Caco-2 (cell line): ENCODE measurements at regions of chr5 and their contacts with region 1.

Region 1: GRCh38 chr5:87267574-87268125 is at the start of gene RASA1:
- DNase-seq: peak; percentile 96 to 97
- H3K4me3 ChIP-seq: peak within 1 kb of the TSS; percentile 96
- H3K4me3 Mint-ChIP-seq: peak within 1 kb of the TSS; percentile 81
- H3K27ac Mint-ChIP-seq: peak within 1 kb of the TSS; percentile 83
- H3K4me1 ChIP-seq: peaks cover 6% of the 10 kb centered on the region
- H3K4me1 Mint-ChIP-seq: peaks cover 13% of the 10 kb centered on the region
- H3K27me3 ChIP-seq: no peaks in the 10 kb centered on the region
- H3K27me3 Mint-ChIP-seq: no peaks in the 10 kb centered on the region
- CTCF ChIP-seq: no peak
- total RNA-seq, gene RASA1: 23.0 and 24.4 TPM in 2 replicates

Region 2: DNA sequence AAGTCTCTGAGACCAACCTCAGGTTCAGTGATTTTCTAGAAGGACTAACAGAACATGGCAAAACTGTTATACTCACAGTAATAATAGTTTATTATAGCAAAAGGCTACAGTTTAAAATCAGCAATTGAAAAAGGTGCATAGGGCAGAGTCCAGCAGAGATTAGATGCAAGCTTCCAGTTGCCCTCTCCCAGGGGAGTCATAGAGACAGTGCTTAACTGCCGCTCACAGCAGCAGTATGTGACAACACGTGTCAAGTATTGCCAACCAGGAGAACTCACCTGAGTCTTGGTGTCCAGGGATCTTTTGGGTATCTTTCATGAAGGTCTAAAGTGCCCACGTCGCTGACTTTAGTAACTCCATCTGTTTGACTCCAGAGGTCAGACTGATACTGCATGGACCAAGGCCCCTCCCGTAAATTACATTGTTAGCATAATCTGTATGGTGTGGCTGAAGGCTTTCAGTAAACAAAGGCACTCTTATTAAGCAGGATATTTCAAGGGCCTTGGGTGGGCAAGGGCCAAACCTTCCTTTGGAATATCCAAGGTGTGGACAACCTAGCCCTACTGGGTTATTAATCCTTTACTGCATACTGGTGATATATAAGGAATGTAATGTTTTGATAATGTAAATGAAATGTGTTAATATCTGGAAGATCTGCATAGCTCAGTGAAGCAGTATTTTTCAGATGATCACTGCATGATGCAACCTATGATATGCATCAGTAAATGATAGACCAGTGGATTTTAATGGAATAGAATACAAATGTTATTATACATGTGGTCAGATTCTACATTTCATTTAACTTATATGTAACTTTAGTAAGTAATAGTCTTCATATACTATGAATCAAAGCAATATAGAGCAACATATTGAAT is 44.0 kb after region 1 on chr5:
- CTCF ChIA-PET with region 1: no interaction called
- POLR2A ChIA-PET with region 1: no interaction called
- intact Hi-C with region 1: loop called (anchors 2 kb)
- DNase-seq: peak; percentile 10 to 43
- H3K4me3 ChIP-seq: no peak overlapping the region
- H3K4me3 Mint-ChIP-seq: no peak overlapping the region
- H3K27ac Mint-ChIP-seq: no peak overlapping the region
- H3K4me1 ChIP-seq: peaks cover 14% of the 10 kb centered on the region
- H3K4me1 Mint-ChIP-seq: peaks cover 24% of the 10 kb centered on the region
- H3K27me3 ChIP-seq: no peaks in the 10 kb centered on the region
- H3K27me3 Mint-ChIP-seq: no peaks in the 10 kb centered on the region
- CTCF ChIP-seq: no peak

Region 3: GRCh38 chr5:87340716-87341115 is 73.1 kb after region 1 on chr5:
- CTCF ChIA-PET with region 1: no interaction called
- POLR2A ChIA-PET with region 1: no interaction called
- intact Hi-C with region 1: no loop called
- DNase-seq: no peak
- H3K4me3 ChIP-seq: no peak overlapping the region
- H3K4me3 Mint-ChIP-seq: no peak overlapping the region
- H3K27ac Mint-ChIP-seq: no peak overlapping the region
- H3K4me1 ChIP-seq: no peaks in the 10 kb centered on the region
- H3K4me1 Mint-ChIP-seq: no peaks in the 10 kb centered on the region
- H3K27me3 ChIP-seq: no peaks in the 10 kb centered on the region
- H3K27me3 Mint-ChIP-seq: no peaks in the 10 kb centered on the region
- CTCF ChIP-seq: no peak

Region 4: DNA sequence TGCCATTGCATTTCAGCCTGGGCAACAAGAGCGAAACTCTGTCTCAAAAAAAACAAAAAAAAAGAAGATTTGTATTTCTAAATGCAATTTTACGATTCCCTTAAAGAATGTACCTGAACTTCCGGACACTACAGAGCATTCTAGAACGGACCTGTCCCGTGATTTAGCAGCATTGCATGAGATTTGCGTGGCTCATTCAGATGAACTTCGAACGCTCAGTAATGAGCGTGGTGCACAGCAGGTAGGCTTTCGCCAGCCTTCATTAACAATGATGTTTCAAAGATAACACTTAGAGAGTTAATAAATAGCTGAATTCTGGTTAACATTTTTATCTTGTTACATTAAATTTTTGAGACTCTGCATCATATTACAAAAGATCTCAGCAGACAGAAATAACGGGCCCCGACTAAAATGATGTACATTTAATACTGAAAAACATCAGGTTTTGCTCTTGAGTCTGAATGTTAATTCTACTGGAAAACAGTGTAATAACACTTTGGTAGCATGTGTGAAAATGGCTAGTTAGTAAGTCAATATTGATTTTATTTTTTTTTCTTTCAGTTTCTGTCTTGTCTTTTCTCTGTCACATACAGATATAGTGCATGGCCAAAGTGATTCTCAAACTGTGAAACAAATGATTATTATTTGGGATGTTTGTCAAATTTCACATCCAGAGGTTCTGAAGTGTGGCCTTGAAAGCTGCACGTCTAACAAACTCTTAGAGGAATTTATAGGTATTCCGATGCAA is 121.8 kb after region 1 on chr5:
- CTCF ChIA-PET with region 1: no interaction called
- POLR2A ChIA-PET with region 1: no interaction called
- intact Hi-C with region 1: loop called (anchors 5 kb)
- DNase-seq: no peak
- H3K4me3 ChIP-seq: no peak overlapping the region
- H3K4me3 Mint-ChIP-seq: no peak overlapping the region
- H3K27ac Mint-ChIP-seq: no peak overlapping the region
- H3K4me1 ChIP-seq: peaks cover 22% of the 10 kb centered on the region
- H3K4me1 Mint-ChIP-seq: peaks cover 6% of the 10 kb centered on the region
- H3K27me3 ChIP-seq: no peaks in the 10 kb centered on the region
- H3K27me3 Mint-ChIP-seq: no peaks in the 10 kb centered on the region
- CTCF ChIP-seq: no peak

Region 5: DNA sequence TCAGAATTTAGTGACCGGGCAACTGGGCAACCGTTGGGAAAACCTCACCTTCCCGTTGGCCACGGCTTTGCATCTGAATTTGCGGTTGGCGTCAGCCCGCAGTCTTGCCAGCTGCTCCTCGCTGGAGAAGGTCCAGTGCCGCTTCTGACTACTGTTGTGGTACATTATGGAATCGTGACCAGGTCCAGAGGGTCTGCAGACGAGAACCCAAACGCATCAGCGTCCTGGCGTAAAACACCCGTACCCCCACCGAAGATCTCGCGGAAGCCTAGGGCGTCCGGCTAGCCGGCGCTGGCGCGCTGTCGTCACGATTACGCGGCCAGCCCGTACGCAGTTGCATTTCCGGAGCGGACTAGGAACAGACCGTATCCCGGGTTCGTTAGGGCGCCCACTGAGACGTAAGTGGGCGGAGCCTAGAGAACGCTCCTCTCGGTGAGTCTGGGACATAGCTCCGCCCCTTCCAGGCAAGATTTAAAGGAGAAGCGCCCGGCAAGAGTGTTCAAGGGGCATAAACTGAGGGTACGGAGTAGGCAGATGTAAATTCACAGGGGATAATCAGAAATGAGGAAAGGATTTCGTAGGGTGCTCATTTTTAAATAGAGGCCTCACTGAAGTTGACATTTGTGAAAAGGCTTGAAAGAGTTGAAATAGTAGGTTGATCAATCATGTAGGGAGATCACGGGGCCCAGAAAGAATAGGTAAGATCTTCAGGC is 145.1 kb after region 1 on chr5 and contains the start of gene CCNH:
- CTCF ChIA-PET with region 1: no interaction called
- POLR2A ChIA-PET with region 1: interaction called, 4 read pairs
- intact Hi-C with region 1: loop called (anchors 1 kb)
- DNase-seq: peak; percentile 96 to 97
- H3K4me3 ChIP-seq: peak within 1 kb of the TSS; percentile 78
- H3K4me3 Mint-ChIP-seq: peak within 1 kb of the TSS; percentile 91
- H3K27ac Mint-ChIP-seq: peak within 1 kb of the TSS; percentile 93
- H3K4me1 ChIP-seq: 0 out of 2 replicates have a peak, but pooled peaks cover 5% of the 10 kb centered on the region
- H3K4me1 Mint-ChIP-seq: no peaks in the 10 kb centered on the region
- H3K27me3 ChIP-seq: no peaks in the 10 kb centered on the region
- H3K27me3 Mint-ChIP-seq: peaks cover 2% of the 10 kb centered on the region
- CTCF ChIP-seq: no peak
- total RNA-seq, gene CCNH: 39.4 and 39.6 TPM in 2 replicates

Region 6: GRCh38 chr5:87732875-87733768 is 465.5 kb after region 1 on chr5:
- CTCF ChIA-PET with region 1: no interaction called
- POLR2A ChIA-PET with region 1: no interaction called
- intact Hi-C with region 1: no loop called
- DNase-seq: no peak
- H3K4me3 ChIP-seq: no peak overlapping the region
- H3K4me3 Mint-ChIP-seq: no peak overlapping the region
- H3K27ac Mint-ChIP-seq: no peak overlapping the region
- H3K4me1 ChIP-seq: no peaks in the 10 kb centered on the region
- H3K4me1 Mint-ChIP-seq: no peaks in the 10 kb centered on the region
- H3K27me3 ChIP-seq: no peaks in the 10 kb centered on the region
- H3K27me3 Mint-ChIP-seq: no peaks in the 10 kb centered on the region
- CTCF ChIP-seq: no peak